ENCODE measurements at regions of chr10 and their contacts with region 1.

Region 1: DNA sequence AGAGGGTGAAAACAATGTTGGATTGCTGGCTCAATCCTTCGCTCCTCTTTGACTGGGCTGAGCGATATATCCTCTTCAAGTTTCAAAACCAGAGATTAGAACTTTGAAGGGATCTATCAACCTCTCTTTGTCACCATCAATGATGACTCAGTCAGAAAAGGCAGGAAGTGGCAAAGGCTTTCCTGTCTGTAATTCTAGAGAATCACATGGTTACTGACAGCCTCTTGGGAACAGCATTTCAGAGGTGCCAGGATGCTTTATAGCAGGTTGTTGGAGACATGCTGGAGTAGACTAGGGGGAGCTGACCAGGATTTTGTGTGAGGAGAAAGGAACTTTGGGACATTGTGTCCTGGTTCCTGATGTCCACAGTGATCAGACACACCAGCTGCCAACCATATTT is 81.3 kb downstream of the PRKCQ start:
- DNase-seq: no peak
- ATAC-seq: no peak
- H3K4me3 ChIP-seq: no peak overlapping the region
- H3K27ac ChIP-seq: no peak overlapping the region
- H3K4me1 ChIP-seq: no peaks in the 10 kb centered on the region
- H3K27me3 ChIP-seq: peaks cover 0 to 2% of the 10 kb centered on the region in 2 experiments; a peak in 2 of 4 replicates
- CTCF ChIP-seq: no peak
- EP300 ChIP-seq: no peak
- POLR2A ChIP-seq: no peak
- RAD21 ChIP-seq: no peak

Region 2: GRCh38 chr10:6563075-6563474 is 64.3 kb after region 1 on chr10:
- CTCF ChIA-PET with region 1: no interaction called
- POLR2A ChIA-PET with region 1: no interaction called
- RAD21 ChIA-PET with region 1: interaction called, 8 read pairs
- SMC1A ChIA-PET with region 1: interaction called, 10 read pairs
- in situ Hi-C with region 1: no loop called
- intact Hi-C with region 1: no loop called
- DNase-seq: no peak
- ATAC-seq: peak; percentile 65
- H3K4me3 ChIP-seq: no peak overlapping the region
- H3K27ac ChIP-seq: no peak overlapping the region
- H3K4me1 ChIP-seq: no peaks in the 10 kb centered on the region
- H3K27me3 ChIP-seq: peaks cover 0 to 6% of the 10 kb centered on the region in 2 experiments; a peak in 3 of 4 replicates
- CTCF ChIP-seq: no peak
- EP300 ChIP-seq: no peak
- POLR2A ChIP-seq: no peak
- RAD21 ChIP-seq: no peak